ENCODE measurements at regions of chrX and their contacts with region 1.

Region 1: GRCh38 chrX:53317365-53318069 is 36.1 kb upstream of the IQSEC2 start:
- DNase-seq: peak; percentile 51 to 81 (median 64)
- ATAC-seq: peak; percentile 84
- H3K4me3 ChIP-seq: no peak overlapping the region
- H3K4me3 Mint-ChIP-seq: no peak overlapping the region
- H3K27ac ChIP-seq: no peak overlapping the region
- H3K27ac Mint-ChIP-seq: no peak overlapping the region
- H3K4me1 ChIP-seq: no peaks in the 10 kb centered on the region
- H3K4me1 Mint-ChIP-seq: peaks cover 8 to 21% (median 13%) of the 10 kb centered on the region in 7 donors
- H3K27me3 ChIP-seq: peaks cover 0 to 11% of the 10 kb centered on the region in 2 donors
- H3K27me3 Mint-ChIP-seq: peaks cover 11 to 37% (median 26%) of the 10 kb centered on the region in 5 donors

Region 2: DNA sequence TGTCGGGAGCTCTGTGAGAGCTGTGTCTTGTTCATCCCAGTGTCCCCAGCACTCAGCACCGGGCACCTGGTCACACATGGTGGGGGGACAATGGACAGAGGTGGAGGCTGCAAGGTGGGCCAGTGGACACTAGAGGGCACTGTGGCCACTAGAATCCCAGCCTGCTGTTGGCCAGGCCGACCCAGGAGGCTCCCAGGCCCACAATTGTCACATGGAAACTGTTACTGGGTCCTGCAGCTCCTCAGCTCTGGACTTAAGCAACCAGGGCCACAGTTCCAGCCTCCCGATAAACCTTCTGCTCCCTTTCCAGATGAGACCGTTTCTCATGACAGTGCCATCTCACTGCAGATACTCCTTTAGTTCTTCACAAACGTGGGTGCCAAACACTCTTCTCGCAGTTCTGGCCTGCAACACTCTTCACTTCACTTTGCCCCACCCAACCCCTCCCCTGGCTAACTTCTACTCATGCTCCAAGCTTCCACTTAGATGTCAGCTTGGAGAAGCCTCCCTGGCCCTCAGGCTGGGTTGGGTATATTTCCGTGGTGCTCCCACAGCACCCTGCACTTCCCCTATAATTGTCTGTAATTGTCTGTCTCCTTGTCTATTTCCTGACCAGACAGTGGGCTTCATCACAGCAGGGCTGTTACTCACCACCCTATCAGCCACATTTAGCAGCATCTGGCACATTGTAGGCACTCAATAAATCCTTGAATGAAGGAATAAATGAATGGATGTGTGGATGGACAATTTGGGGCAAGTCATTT is 32.7 kb before region 1 on chrX:
- CTCF ChIA-PET with region 1: interaction called, 5 read pairs
- POLR2A ChIA-PET with region 1: no interaction called
- intact Hi-C with region 1: loop called in 1 of 2 experiments (anchors 2 kb)
- DNase-seq: peak in 8 of 9 donors; percentile 14 to 53 (median 40)
- ATAC-seq: peak; percentile 78
- H3K4me3 ChIP-seq: no peak overlapping the region
- H3K4me3 Mint-ChIP-seq: no peak overlapping the region
- H3K27ac ChIP-seq: no peak overlapping the region
- H3K27ac Mint-ChIP-seq: peak overlapping the region in 1 of 9 donors; percentile 21
- H3K4me1 ChIP-seq: peaks cover 6 to 19% of the 10 kb centered on the region in 2 donors
- H3K4me1 Mint-ChIP-seq: peaks cover 14 to 47% (median 31%) of the 10 kb centered on the region in 7 donors
- H3K27me3 ChIP-seq: no peaks in the 10 kb centered on the region
- H3K27me3 Mint-ChIP-seq: no peaks in the 10 kb centered on the region

Region 3: DNA sequence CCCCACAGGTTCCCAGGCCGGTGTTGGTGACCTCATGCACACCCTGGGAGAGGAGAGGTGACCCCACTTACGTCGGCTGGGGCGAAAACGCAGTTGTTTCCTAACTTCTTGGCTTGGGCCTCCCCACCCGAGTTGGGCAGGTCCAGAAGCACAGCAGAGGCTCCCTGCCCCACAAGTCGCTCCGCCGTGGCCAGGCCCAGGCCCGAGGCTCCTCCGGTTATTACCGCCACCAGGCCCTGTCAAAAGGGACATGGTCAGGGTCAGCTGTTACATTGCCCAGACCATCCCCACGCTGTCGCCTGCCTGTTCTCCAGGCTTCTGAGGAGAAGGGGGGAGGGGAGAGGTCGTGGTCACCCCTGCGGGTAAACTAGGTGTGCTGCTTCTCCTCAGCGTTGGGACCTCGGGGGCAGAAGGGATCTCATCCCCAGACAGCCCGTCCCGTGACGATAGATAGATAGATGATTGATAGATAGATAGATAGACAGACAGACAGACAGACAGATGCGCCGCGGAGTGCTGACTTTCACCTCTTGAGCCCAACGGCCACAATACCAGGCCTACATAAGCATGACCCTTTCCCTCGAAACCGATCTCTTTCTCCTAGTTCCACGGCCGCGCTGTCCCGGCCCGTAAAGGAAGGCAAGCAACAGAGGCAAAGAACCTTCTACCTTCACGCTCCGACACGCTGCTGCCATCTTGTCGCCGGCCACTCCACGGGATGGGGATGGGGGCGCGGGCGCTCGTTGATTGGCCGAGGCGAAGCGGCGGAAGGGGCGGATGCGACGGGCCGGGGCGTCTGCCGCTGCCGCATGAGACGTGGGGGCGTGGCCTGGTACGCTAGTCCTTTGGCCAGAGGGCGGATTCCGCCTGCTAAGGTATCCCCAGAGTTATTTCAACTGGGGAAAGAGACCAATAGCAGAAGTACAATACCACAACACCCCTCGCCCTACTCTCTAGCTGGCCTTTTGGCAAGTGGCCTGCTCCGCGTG is 116.4 kb after region 1 on chrX and contains the start of gene HSD17B10:
- CTCF ChIA-PET with region 1: interaction called, 6 read pairs
- POLR2A ChIA-PET with region 1: no interaction called
- intact Hi-C with region 1: loop called (anchors 1 kb)
- DNase-seq: peak; percentile 70 to 84 (median 81)
- ATAC-seq: peak; percentile 99
- H3K4me3 ChIP-seq: peak within 1 kb of the TSS; percentile 76
- H3K4me3 Mint-ChIP-seq: peak within 1 kb of the TSS; percentile 83 to 99 (median 94)
- H3K27ac ChIP-seq: peak within 1 kb of the TSS; percentile 82
- H3K27ac Mint-ChIP-seq: peak within 1 kb of the TSS; percentile 85 to 99 (median 94)
- H3K4me1 ChIP-seq: peaks cover 0 to 11% of the 10 kb centered on the region in 2 donors
- H3K4me1 Mint-ChIP-seq: peaks cover 8 to 32% (median 15%) of the 10 kb centered on the region in 7 donors
- H3K27me3 ChIP-seq: no peaks in the 10 kb centered on the region
- H3K27me3 Mint-ChIP-seq: no peaks in the 10 kb centered on the region
- total RNA-seq, gene HSD17B10: 23.9 to 116 (median 38.6) TPM

Region 4: DNA sequence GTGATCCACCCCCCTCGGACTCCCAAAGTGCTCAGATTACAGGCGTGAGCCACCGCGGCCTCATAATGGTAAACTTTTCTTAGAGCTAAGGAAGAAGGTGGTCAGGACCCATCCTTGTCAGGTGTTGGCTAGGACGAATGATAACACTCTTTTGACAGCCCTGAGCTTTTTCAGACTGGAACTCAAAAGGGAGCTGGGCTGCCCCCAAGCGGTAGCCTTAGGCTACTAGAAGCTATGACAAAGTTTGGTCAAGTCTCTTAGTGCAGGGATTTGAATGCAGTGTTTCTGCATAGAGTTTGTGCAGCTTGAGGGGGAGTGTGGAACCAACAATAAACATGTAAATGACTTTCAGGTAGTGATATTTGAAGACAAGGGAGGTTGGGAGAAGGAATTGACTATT is 128.5 kb after region 1 on chrX:
- CTCF ChIA-PET with region 1: interaction called, 16 read pairs
- POLR2A ChIA-PET with region 1: no interaction called
- intact Hi-C with region 1: loop called (anchors 1 kb)
- DNase-seq: peak in 7 of 9 donors; percentile 7 to 42 (median 26)
- ATAC-seq: peak; percentile 61
- H3K4me3 ChIP-seq: no peak overlapping the region
- H3K4me3 Mint-ChIP-seq: no peak overlapping the region
- H3K27ac ChIP-seq: no peak overlapping the region
- H3K27ac Mint-ChIP-seq: no peak overlapping the region
- H3K4me1 ChIP-seq: peaks cover 0 to 3% of the 10 kb centered on the region in 2 donors
- H3K4me1 Mint-ChIP-seq: peaks cover 1 to 9% (median 5%) of the 10 kb centered on the region in 7 donors
- H3K27me3 ChIP-seq: no peaks in the 10 kb centered on the region
- H3K27me3 Mint-ChIP-seq: no peaks in the 10 kb centered on the region

Region 5: GRCh38 chrX:53481816-53482465 is 164.4 kb after region 1 on chrX:
- CTCF ChIA-PET with region 1: interaction called, 21 read pairs
- POLR2A ChIA-PET with region 1: no interaction called
- intact Hi-C with region 1: loop called (anchors 1 kb)
- DNase-seq: peak in 8 of 9 donors; percentile 14 to 57 (median 32)
- ATAC-seq: peak; percentile 61
- H3K4me3 ChIP-seq: no peak overlapping the region
- H3K4me3 Mint-ChIP-seq: no peak overlapping the region
- H3K27ac ChIP-seq: no peak overlapping the region
- H3K27ac Mint-ChIP-seq: no peak overlapping the region
- H3K4me1 ChIP-seq: no peaks in the 10 kb centered on the region
- H3K4me1 Mint-ChIP-seq: peaks cover 0 to 2% (median 0%) of the 10 kb centered on the region in 7 donors
- H3K27me3 ChIP-seq: no peaks in the 10 kb centered on the region
- H3K27me3 Mint-ChIP-seq: peaks cover 0 to 2% (median 0%) of the 10 kb centered on the region in 5 donors

Region 6: GRCh38 chrX:53831662-53832635 is 514.4 kb after region 1 on chrX:
- CTCF ChIA-PET with region 1: no interaction called
- POLR2A ChIA-PET with region 1: no interaction called
- intact Hi-C with region 1: loop called in 1 of 2 experiments (anchors 1 kb)
- DNase-seq: peak in 8 of 9 donors; percentile 12 to 45 (median 32)
- ATAC-seq: peak; percentile 71
- H3K4me3 ChIP-seq: no peak overlapping the region
- H3K4me3 Mint-ChIP-seq: peak overlapping the region in 1 of 10 donors; percentile 56
- H3K27ac ChIP-seq: no peak overlapping the region
- H3K27ac Mint-ChIP-seq: no peak overlapping the region
- H3K4me1 ChIP-seq: no peaks in the 10 kb centered on the region
- H3K4me1 Mint-ChIP-seq: peaks cover 0 to 16% (median 4%) of the 10 kb centered on the region in 7 donors
- H3K27me3 ChIP-seq: no peaks in the 10 kb centered on the region
- H3K27me3 Mint-ChIP-seq: no peaks in the 10 kb centered on the region